ENCODE measurements at regions of chr5 and their contacts with region 1.

Region 1: GRCh38 chr5:179623003-179623880 is at the start of gene HNRNPH1:
- DNase-seq: peak; percentile 98 to 99 (median 99)
- H3K4me3 ChIP-seq: peak within 1 kb of the TSS; percentile 80 to 95
- H3K4me3 Mint-ChIP-seq: peak within 1 kb of the TSS; percentile 91 to 99 (median 98)
- H3K27ac ChIP-seq: peak within 1 kb of the TSS; percentile 96
- H3K27ac Mint-ChIP-seq: peak within 1 kb of the TSS; percentile 99 to 100 (median 99)
- H3K4me1 ChIP-seq: peaks cover 53% of the 10 kb centered on the region
- H3K4me1 Mint-ChIP-seq: peaks cover 36 to 67% (median 44%) of the 10 kb centered on the region in 4 donors
- H3K27me3 ChIP-seq: no peaks in the 10 kb centered on the region
- H3K27me3 Mint-ChIP-seq: peaks cover 0 to 6% of the 10 kb centered on the region in 2 donors
- total RNA-seq, gene HNRNPH1: 1,611 to 1,625 TPM

Region 2: GRCh38 chr5:178732281-178732680 is 891.0 kb before region 1 on chr5:
- CTCF ChIA-PET with region 1: no interaction called
- POLR2A ChIA-PET with region 1: interaction called, 5 read pairs
- intact Hi-C with region 1: loop called (anchors 1 kb)
- DNase-seq: no peak
- H3K4me3 ChIP-seq: no peak overlapping the region
- H3K4me3 Mint-ChIP-seq: peak overlapping the region in 2 of 8 donors; percentile 25 to 55
- H3K27ac ChIP-seq: no peak overlapping the region
- H3K27ac Mint-ChIP-seq: peak overlapping the region in 2 of 7 donors; percentile 28 to 73
- H3K4me1 ChIP-seq: peaks cover 5% of the 10 kb centered on the region
- H3K4me1 Mint-ChIP-seq: peaks cover 6 to 15% (median 7%) of the 10 kb centered on the region in 4 donors
- H3K27me3 ChIP-seq: no peaks in the 10 kb centered on the region
- H3K27me3 Mint-ChIP-seq: no peaks in the 10 kb centered on the region

Region 3: DNA sequence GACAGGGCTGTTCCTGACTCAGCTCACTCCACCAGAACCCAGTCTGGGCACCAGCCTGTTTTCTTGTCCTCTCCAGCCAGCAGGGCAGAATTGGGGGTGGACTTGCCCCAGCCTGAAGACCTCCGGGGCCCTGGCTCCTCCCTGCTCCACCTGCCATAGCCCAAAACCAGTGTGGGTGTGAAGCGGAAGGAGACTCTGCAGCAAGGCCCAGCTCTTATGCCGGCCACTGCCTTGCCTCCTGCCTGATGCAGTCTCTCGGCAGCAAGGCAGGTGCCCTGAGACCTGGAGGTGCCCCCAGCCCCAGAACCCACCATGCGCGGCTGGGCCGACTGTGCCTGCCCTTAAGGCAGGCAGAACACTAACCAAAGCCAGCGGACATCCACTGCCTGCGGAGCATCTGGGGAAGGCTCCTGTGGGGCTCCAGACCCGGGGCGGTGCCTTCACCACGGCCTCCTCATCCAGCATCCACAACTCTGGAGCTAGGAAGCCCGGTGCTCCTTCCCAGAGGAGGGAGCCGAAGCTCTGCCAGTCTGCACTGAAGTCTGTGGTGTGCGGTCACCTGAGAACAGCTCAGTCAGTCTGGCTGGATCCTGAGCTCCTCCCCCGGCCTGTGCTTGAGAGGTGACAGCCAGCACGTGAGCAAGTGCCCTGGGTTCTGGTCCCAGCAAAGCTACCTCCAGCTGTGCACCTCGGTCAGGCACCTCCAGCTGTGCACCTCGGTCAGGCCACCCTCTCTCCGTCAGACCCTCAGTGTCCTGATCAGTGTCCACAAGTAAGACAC is 394.7 kb before region 1 on chr5:
- CTCF ChIA-PET with region 1: no interaction called
- POLR2A ChIA-PET with region 1: no interaction called
- intact Hi-C with region 1: no loop called
- DNase-seq: no peak
- H3K4me3 ChIP-seq: no peak overlapping the region
- H3K4me3 Mint-ChIP-seq: no peak overlapping the region
- H3K27ac ChIP-seq: no peak overlapping the region
- H3K27ac Mint-ChIP-seq: no peak overlapping the region
- H3K4me1 ChIP-seq: no peaks in the 10 kb centered on the region
- H3K4me1 Mint-ChIP-seq: no peaks in the 10 kb centered on the region
- H3K27me3 ChIP-seq: no peaks in the 10 kb centered on the region
- H3K27me3 Mint-ChIP-seq: peaks cover 0 to 4% of the 10 kb centered on the region in 2 donors

Region 4: DNA sequence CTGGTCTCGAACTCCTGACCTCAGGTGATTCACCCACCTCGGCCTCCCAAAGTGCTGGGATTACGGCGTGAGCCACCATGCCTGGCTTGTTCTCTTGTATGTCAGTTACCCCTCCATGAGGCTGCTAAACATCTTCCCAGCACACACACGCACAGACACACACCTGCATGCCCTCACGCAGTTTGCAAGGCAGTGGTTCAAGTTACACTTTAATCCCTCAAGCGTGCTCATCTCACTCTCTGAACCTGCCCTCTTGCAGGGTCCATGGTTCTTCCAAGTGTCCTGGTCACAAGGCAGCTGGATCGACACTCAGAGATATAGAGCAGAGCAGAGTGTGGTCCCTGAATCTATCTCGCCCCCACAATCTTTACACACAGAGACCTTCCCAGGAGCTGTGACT is 107.0 kb before region 1 on chr5:
- CTCF ChIA-PET with region 1: no interaction called
- POLR2A ChIA-PET with region 1: no interaction called
- intact Hi-C with region 1: no loop called
- DNase-seq: no peak
- H3K4me3 ChIP-seq: no peak overlapping the region
- H3K4me3 Mint-ChIP-seq: no peak overlapping the region
- H3K27ac ChIP-seq: no peak overlapping the region
- H3K27ac Mint-ChIP-seq: no peak overlapping the region
- H3K4me1 ChIP-seq: no peaks in the 10 kb centered on the region
- H3K4me1 Mint-ChIP-seq: no peaks in the 10 kb centered on the region
- H3K27me3 ChIP-seq: no peaks in the 10 kb centered on the region
- H3K27me3 Mint-ChIP-seq: peaks cover 4 to 6% of the 10 kb centered on the region in 2 donors

Region 5: DNA sequence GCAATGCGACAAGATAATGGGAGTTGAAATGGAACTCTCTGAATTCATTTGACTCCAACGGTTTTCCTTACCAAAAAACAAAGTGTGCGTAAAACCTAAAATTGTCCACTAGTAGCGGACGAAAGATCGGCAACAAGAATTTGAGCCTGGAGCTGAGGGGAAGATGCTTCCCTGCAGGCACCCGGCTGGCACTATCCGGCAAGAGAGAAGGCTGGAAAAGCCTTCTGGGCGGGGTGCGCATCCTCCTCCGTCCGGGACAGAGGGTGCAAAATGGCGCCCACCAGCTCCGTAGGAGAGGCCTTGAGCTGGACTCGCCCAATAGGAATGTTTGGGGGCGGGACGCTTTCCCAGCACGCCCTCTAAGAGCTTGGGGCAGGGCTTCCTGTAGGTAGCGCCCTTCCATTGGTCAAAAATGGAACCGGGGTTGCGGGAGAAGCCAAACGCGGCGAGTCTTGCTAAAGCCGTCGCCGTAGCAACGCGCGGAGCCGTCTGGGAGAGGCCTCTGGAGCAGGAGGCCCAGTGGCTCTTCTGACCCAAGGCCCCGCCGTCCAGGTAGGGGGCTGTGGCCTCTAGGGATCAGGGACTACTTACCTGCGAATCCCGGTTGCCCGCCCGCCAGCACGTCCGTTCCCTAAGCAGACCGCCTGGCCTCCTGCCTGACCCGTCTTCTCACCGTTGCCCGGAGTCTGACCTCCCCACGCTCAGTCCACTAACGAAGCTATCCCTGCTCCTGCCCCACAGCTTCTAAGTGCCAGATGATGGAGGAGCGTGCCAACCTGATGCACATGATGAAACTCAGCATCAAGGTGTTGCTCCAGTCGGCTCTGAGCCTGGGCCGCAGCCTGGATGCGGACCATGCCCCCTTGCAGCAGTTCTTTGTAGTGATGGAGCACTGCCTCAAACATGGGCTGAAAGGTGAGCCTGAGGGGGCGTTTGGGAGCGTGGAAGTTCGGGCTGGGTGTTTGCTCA is 63.7 kb before region 1 on chr5:
- CTCF ChIA-PET with region 1: interaction called, 3 read pairs
- POLR2A ChIA-PET with region 1: interaction called, 72 read pairs
- intact Hi-C with region 1: loop called (anchors 2 kb)
- DNase-seq: peak; percentile 85 to 97 (median 92)
- H3K4me3 ChIP-seq: peak overlapping the region; percentile 50 to 64
- H3K4me3 Mint-ChIP-seq: peak overlapping the region; percentile 84 to 98 (median 90)
- H3K27ac ChIP-seq: peak overlapping the region; percentile 62
- H3K27ac Mint-ChIP-seq: peak overlapping the region; percentile 80 to 96 (median 93)
- H3K4me1 ChIP-seq: peaks cover 11% of the 10 kb centered on the region
- H3K4me1 Mint-ChIP-seq: peaks cover 16 to 28% (median 24%) of the 10 kb centered on the region in 4 donors
- H3K27me3 ChIP-seq: no peaks in the 10 kb centered on the region
- H3K27me3 Mint-ChIP-seq: no peaks in the 10 kb centered on the region

Region 6: DNA sequence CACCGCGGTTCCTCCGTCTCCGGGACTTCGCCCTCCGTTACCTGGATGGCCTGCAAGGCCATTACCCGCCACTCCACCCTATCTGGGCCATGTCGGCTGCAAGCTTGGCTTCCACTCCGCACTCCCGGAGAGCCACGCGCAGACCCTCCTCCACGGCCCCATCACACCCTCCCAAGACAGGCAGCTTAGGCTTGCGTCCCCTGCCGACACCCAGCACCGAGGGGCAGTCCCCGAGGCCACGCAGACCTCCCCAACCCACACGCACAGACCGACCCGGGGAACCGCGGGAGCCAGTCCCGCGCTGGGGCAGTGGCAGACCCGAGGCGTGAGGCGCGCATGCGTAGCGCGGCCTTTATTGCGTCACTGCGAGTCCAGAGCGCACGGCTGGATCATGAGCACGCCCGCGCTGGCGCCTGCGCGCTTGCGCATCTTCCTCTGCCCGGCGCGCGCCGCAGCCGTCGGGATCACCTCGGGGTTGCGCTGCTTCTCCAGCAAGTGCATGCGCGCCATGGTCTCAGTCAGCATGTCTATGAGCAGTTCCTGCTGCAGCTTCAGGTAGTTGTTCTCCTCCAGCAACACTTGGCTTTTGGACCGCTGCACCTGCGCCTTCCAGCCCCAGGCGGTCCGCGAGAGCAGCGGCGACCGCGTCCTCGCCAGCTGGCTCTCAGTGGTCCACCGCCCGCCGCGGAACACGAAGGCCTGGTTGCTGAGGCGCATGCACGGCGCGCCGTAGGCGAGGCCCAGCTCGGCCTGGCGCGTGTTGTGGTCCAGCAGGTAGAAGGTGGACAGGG is 55.2 kb after region 1 on chr5:
- CTCF ChIA-PET with region 1: interaction called, 10 read pairs
- POLR2A ChIA-PET with region 1: interaction called, 59 read pairs
- intact Hi-C with region 1: loop called (anchors 1 kb)
- DNase-seq: peak; percentile 93 to 95 (median 93)
- H3K4me3 ChIP-seq: peak overlapping the region; percentile 73 to 98
- H3K4me3 Mint-ChIP-seq: peak overlapping the region; percentile 96 to 99 (median 96)
- H3K27ac ChIP-seq: peak overlapping the region; percentile 83
- H3K27ac Mint-ChIP-seq: peak overlapping the region; percentile 95 to 98 (median 98)
- H3K4me1 ChIP-seq: peaks cover 28% of the 10 kb centered on the region
- H3K4me1 Mint-ChIP-seq: peaks cover 21 to 51% (median 31%) of the 10 kb centered on the region in 4 donors
- H3K27me3 ChIP-seq: no peaks in the 10 kb centered on the region
- H3K27me3 Mint-ChIP-seq: no peaks in the 10 kb centered on the region

Region 7: GRCh38 chr5:179732417-179732917 is 109.2 kb after region 1 on chr5 and contains the start of gene MAML1:
- CTCF ChIA-PET with region 1: interaction called, 5 read pairs
- POLR2A ChIA-PET with region 1: interaction called, 51 read pairs
- intact Hi-C with region 1: loop called (anchors 10 kb)
- DNase-seq: peak; percentile 99 to 100 (median 99)
- H3K4me3 ChIP-seq: peak within 1 kb of the TSS; percentile 53 to 62
- H3K4me3 Mint-ChIP-seq: peak within 1 kb of the TSS; percentile 92 to 97 (median 95)
- H3K27ac ChIP-seq: peak within 1 kb of the TSS; percentile 96
- H3K27ac Mint-ChIP-seq: peak within 1 kb of the TSS; percentile 92 to 99 (median 96)
- H3K4me1 ChIP-seq: peaks cover 44% of the 10 kb centered on the region
- H3K4me1 Mint-ChIP-seq: peaks cover 25 to 51% (median 37%) of the 10 kb centered on the region in 4 donors
- H3K27me3 ChIP-seq: no peaks in the 10 kb centered on the region
- H3K27me3 Mint-ChIP-seq: no peaks in the 10 kb centered on the region
- total RNA-seq, gene MAML1: 52.4 to 56.5 TPM

Region 8: DNA sequence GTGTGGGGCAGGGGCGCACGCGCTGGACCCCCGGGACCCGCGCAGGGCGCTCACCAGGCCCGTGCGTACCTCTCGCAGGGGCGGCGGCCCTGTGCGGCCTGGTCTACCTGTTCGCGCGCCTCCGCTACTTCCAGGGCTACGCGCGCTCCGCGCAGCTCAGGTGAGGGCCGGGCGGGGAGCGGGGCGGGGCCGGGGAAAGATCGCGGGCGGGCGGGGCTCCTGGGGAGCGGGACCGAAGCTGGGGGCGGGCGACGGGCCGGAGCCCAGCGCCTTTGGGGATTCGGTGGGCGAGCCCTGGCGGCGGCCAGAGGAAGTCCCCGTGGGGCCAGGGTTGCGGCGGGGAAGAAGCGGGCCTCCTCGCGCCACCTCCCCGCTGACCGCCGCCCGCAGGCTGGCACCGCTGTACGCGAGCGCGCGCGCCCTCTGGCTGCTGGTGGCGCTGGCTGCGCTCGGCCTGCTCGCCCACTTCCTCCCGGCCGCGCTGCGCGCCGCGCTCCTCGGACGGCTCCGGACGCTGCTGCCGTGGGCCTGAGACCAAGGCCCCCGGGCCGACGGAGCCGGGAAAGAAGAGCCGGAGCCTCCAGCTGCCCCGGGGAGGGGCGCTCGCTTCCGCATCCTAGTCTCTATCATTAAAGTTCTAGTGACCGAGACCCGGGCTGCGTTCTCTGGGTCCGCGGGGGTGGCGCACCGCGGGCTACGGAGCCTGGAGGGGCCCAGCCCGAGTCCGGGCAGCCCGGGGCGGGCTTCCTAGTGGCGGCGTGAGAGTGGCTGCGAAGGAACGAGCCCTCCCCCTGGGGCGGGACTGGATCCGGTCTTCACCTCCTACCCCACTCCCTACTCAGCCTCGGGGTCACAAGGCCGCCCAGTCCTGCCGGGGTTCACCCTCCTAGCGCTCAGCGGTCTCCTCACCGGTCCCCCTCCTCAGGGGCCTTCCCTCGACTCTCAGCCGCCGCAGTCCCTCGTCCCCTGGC is 172.9 kb after region 1 on chr5:
- CTCF ChIA-PET with region 1: interaction called, 3 read pairs
- POLR2A ChIA-PET with region 1: interaction called, 25 read pairs
- intact Hi-C with region 1: no loop called
- DNase-seq: peak; percentile 61 to 77 (median 68)
- H3K4me3 ChIP-seq: peak overlapping the region; percentile 23 to 69
- H3K4me3 Mint-ChIP-seq: peak overlapping the region; percentile 50 to 79 (median 64)
- H3K27ac ChIP-seq: peak overlapping the region; percentile 44
- H3K27ac Mint-ChIP-seq: peak overlapping the region in 6 of 7 donors; percentile 11 to 89 (median 57)
- H3K4me1 ChIP-seq: peaks cover 25% of the 10 kb centered on the region
- H3K4me1 Mint-ChIP-seq: peaks cover 11 to 51% (median 27%) of the 10 kb centered on the region in 4 donors
- H3K27me3 ChIP-seq: no peaks in the 10 kb centered on the region
- H3K27me3 Mint-ChIP-seq: no peaks in the 10 kb centered on the region

Measured in CD4-positive, alpha-beta memory T cell (primary cell).